ENCODE measurements at regions of chr1 and their contacts with region 1.

Region 1: DNA sequence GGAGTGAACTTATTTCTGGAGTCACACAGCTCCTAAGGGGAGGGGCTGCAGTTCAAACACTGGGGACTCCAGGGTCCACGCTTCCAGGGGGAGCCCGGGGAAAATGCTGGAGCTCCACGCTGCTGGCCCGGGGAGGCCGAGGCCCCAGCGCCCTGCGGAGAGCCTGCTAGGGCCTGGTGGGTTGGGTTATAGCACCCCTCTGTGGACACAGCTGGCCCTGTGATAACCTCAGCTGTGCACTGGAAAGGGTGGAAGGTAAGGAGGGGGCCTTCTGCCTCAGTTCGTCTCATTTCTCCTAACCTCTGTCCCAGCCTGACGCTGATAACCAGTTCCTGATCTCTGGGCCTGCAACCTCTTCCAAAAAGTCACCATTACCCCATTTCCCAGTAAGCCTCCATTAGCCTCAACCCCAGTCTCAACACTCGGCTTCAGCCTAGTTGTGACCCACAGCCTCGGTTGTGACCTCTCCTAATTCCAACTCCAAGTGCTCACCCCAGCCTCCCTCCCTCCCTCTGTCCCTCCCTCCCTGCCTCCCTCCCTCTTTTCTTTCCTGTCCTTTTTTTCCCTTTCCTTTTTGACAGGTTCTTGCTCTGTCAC is 7.1 kb downstream of the NBL1 start:
- DNase-seq: no peak
- ATAC-seq: peak; percentile 81
- H3K4me3 ChIP-seq: no peak overlapping the region
- H3K27ac ChIP-seq: no peak overlapping the region
- H3K4me1 ChIP-seq: no peaks in the 10 kb centered on the region
- H3K27me3 ChIP-seq: no peaks in the 10 kb centered on the region; a peak in 1 of 4 replicates
- CTCF ChIP-seq: peak; percentile 59 to 86 (median 74)
- EP300 ChIP-seq: no peak
- POLR2A ChIP-seq: no peak
- RAD21 ChIP-seq: peak; percentile 83

Region 2: GRCh38 chr1:19251305-19252196 is 399.7 kb before region 1 on chr1 and contains the starts of genes EMC1 and MRTO4:
- CTCF ChIA-PET with region 1: no interaction called
- POLR2A ChIA-PET with region 1: no interaction called
- RAD21 ChIA-PET with region 1: interaction called, 4 read pairs
- SMC1A ChIA-PET with region 1: no interaction called
- in situ Hi-C with region 1: no loop called
- intact Hi-C with region 1: loop called (anchors 5 kb)
- DNase-seq: peak; percentile 65
- ATAC-seq: peak; percentile 93
- H3K4me3 ChIP-seq: peak within 1 kb of the TSS; percentile 98
- H3K27ac ChIP-seq: peak within 1 kb of the TSS; percentile 97
- H3K4me1 ChIP-seq: peaks cover 13% of the 10 kb centered on the region
- H3K27me3 ChIP-seq: no peaks in the 10 kb centered on the region
- CTCF ChIP-seq: no peak
- EP300 ChIP-seq: no peak; a peak in 1 of 4 replicates
- POLR2A ChIP-seq: peak; percentile 99
- RAD21 ChIP-seq: no peak
- polyA plus RNA-seq, gene EMC1: 12.2 to 12.8 TPM
- polyA plus RNA-seq, gene MRTO4: 43.5 to 64.8 TPM

Region 3: DNA sequence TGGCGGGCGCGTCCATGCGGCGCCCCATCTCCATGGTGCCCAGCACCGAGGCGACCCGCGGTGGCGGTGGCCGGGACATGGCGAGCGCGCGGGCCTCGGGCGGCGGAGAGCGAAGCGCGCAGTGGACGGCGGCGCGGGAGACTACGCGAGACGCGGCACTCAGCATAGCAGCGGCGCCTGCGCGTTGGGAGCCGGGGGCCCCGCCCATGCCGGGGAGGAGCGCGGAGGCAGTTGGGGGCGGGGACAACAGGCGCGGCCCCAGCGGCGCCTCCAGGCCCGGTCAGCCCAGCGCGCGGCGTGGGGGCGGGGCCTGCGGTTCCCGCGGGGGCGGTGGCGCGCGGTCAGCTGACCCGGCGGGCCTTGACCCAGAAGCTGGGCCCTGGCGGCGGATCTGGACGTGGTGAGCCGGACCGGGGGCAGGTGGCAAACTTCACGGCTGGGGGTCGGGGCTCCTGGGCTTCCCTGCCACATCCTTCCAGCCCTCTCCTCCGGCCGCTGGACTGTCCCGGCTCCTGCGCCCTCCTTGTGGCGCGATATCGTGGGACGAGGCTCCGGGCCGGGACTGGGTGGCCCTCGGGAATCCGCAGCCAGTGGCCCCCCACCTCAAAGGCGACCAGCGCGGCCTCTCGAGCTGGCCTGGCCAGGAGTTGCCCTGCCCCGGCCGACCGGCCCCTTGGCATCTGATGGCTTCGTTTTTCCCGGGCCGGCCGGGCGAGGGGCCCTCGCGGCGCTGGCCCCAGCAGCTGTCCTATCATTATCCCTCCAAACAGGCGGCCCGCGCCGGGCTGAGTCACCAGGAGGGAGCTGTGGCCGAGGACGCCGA is 339.1 kb before region 1 on chr1 and contains the starts of genes AKR7A2 and SLC66A1:
- CTCF ChIA-PET with region 1: interaction called, 5 read pairs
- POLR2A ChIA-PET with region 1: no interaction called
- RAD21 ChIA-PET with region 1: no interaction called
- SMC1A ChIA-PET with region 1: no interaction called
- in situ Hi-C with region 1: no loop called
- intact Hi-C with region 1: loop called (anchors 10 kb)
- DNase-seq: peak; percentile 49
- ATAC-seq: peak; percentile 85
- H3K4me3 ChIP-seq: peak within 1 kb of the TSS; percentile 92
- H3K27ac ChIP-seq: peak within 1 kb of the TSS; percentile 80
- H3K4me1 ChIP-seq: peaks cover 44% of the 10 kb centered on the region
- H3K27me3 ChIP-seq: no peaks in the 10 kb centered on the region
- CTCF ChIP-seq: peak in 1 of 3 experiments; percentile 7; a peak in 1 of 6 replicates
- EP300 ChIP-seq: no peak
- POLR2A ChIP-seq: peak; percentile 87
- RAD21 ChIP-seq: no peak
- polyA plus RNA-seq, gene AKR7A2: 1.3 to 9.8 TPM
- polyA plus RNA-seq, gene SLC66A1: 0.58 to 1.8 TPM

Region 4: GRCh38 chr1:19341201-19342072 is 309.8 kb before region 1 on chr1:
- CTCF ChIA-PET with region 1: interaction called, 12 read pairs
- POLR2A ChIA-PET with region 1: no interaction called
- RAD21 ChIA-PET with region 1: interaction called, 3 read pairs
- SMC1A ChIA-PET with region 1: no interaction called
- in situ Hi-C with region 1: no loop called
- intact Hi-C with region 1: loop called (anchors 1 kb)
- DNase-seq: no peak
- ATAC-seq: peak; percentile 88
- H3K4me3 ChIP-seq: no peak overlapping the region
- H3K27ac ChIP-seq: no peak overlapping the region
- H3K4me1 ChIP-seq: 0 out of 2 replicates have a peak, but pooled peaks cover 2% of the 10 kb centered on the region
- H3K27me3 ChIP-seq: no peaks in the 10 kb centered on the region
- CTCF ChIP-seq: peak; percentile 81 to 96 (median 94)
- EP300 ChIP-seq: no peak
- POLR2A ChIP-seq: 0 out of 2 replicates have a peak, but pooled peaks have one; percentile 18
- RAD21 ChIP-seq: peak; percentile 40

Region 5: DNA sequence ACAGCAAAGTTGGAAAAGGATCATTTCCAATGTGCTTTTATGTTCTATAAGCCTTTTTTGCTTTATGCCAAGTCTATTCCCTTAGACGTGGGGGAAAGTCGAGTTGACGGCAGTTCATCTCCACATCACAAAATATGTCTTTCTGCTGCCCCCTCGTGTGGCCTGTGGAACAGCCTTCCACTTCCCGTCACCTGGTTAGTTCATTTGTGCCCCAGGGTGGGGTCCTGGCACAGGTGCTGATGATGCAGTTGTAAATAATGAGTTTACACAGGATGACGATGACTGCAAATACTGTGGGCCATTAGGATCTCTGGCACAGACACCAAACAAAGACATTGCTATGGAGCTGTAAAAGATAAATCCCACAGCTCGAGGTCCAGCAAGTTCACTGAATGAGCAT is 221.0 kb after region 1 on chr1:
- CTCF ChIA-PET with region 1: no interaction called
- POLR2A ChIA-PET with region 1: no interaction called
- RAD21 ChIA-PET with region 1: no interaction called
- SMC1A ChIA-PET with region 1: no interaction called
- in situ Hi-C with region 1: no loop called
- intact Hi-C with region 1: no loop called
- DNase-seq: no peak
- ATAC-seq: no peak
- H3K4me3 ChIP-seq: no peak overlapping the region
- H3K27ac ChIP-seq: no peak overlapping the region
- H3K4me1 ChIP-seq: no peaks in the 10 kb centered on the region
- H3K27me3 ChIP-seq: no peaks in the 10 kb centered on the region; a peak in 1 of 4 replicates
- CTCF ChIP-seq: no peak
- EP300 ChIP-seq: no peak
- POLR2A ChIP-seq: no peak
- RAD21 ChIP-seq: no peak